CD4-positive, alpha-beta memory T cell (primary cell): ENCODE measurements at regions of chr9 and their contacts with region 1.

Region 1: DNA sequence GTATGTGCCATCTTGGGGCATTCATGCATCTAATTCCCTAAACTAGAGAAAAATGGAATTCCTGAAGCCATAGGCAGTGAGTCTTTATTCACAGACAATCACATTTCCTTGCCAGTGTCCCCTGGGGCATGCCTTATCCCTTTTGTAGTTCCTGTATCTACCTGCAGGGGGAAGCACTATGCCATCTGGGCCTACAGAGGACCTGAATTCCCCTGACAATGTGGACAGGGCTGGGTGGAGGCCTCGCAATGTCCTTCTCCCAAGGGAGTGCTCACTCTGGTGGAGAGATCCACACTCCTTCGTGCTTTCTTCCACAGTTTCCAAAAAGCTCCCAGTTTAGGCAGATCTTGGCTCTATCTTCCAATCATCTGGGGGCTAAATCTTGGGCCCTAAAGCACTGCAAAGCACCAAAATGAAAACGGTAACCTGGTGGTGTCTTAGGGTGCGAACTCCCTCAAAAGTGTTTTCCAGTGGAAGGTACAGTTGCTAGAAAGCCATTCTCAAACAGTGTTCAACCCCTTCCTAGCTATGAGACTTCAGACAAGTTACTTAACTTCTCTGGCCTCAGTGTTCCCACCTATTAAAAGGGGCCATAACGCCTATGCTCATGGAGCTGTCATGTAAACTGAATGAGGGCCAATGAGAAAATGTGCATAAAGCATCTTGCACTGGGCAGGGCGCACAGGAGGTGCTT is 17.5 kb downstream of the WHRN start:
- DNase-seq: peak; percentile 66 to 75 (median 70)
- H3K4me3 ChIP-seq: no peak overlapping the region
- H3K4me3 Mint-ChIP-seq: no peak overlapping the region
- H3K27ac ChIP-seq: no peak overlapping the region
- H3K27ac Mint-ChIP-seq: peak overlapping the region in 2 of 7 donors; percentile 24 to 55
- H3K4me1 ChIP-seq: peaks cover 14% of the 10 kb centered on the region
- H3K4me1 Mint-ChIP-seq: peaks cover 12 to 35% (median 19%) of the 10 kb centered on the region in 4 donors
- H3K27me3 ChIP-seq: no peaks in the 10 kb centered on the region
- H3K27me3 Mint-ChIP-seq: peaks cover 0 to 4% of the 10 kb centered on the region in 2 donors

Region 2: DNA sequence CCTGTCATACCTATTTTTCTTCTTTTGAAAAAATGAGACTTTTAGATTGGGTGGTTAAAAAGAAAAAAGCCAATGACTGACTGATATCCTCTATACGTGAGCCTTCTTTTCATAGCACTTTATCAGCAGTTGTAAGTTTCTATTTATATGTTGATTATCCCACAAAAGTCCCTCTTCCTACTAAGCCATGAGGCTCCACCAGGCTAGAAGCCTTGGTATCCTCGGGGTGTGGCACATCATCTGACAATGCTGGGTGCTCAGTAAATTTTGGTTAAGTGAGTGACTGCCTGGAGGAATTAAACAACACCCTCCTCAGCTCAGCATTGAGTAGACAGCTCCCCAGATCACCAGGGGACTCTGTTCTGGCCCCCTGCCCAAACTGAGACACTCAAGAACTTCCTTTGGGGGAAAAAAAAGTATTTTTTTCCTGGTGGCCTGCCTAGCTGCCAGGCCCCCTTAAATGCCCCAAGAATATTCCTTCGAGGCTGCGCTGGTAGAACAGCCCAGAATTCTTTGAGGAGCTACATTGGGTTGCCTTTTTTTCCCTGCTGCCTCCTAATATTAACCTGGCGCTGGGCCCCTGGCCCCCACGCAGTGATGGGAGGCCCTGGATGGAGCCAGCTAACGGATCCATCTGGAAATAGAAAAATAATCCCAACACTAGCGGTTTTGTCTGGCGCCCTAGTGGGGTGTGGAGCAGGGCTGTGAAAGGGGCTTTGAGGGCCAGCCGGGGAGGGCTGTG is 355.8 kb before region 1 on chr9:
- CTCF ChIA-PET with region 1: no interaction called
- POLR2A ChIA-PET with region 1: no interaction called
- intact Hi-C with region 1: no loop called
- DNase-seq: no peak
- H3K4me3 ChIP-seq: no peak overlapping the region
- H3K4me3 Mint-ChIP-seq: no peak overlapping the region
- H3K27ac ChIP-seq: no peak overlapping the region
- H3K27ac Mint-ChIP-seq: no peak overlapping the region
- H3K4me1 ChIP-seq: no peaks in the 10 kb centered on the region
- H3K4me1 Mint-ChIP-seq: no peaks in the 10 kb centered on the region
- H3K27me3 ChIP-seq: no peaks in the 10 kb centered on the region
- H3K27me3 Mint-ChIP-seq: peaks cover 16 to 24% of the 10 kb centered on the region in 2 donors

Region 3: GRCh38 chr9:114499528-114499927 is 11.8 kb after region 1 on chr9:
- CTCF ChIA-PET with region 1: interaction called, 21 read pairs
- POLR2A ChIA-PET with region 1: interaction called, 15 read pairs
- intact Hi-C with region 1: no loop called
- DNase-seq: no peak
- H3K4me3 ChIP-seq: no peak overlapping the region
- H3K4me3 Mint-ChIP-seq: no peak overlapping the region
- H3K27ac ChIP-seq: no peak overlapping the region
- H3K27ac Mint-ChIP-seq: peak overlapping the region in 2 of 7 donors; percentile 24 to 77
- H3K4me1 ChIP-seq: peaks cover 22% of the 10 kb centered on the region
- H3K4me1 Mint-ChIP-seq: peaks cover 20 to 54% (median 37%) of the 10 kb centered on the region in 4 donors
- H3K27me3 ChIP-seq: no peaks in the 10 kb centered on the region
- H3K27me3 Mint-ChIP-seq: peaks cover 0 to 5% of the 10 kb centered on the region in 2 donors

Region 4: GRCh38 chr9:114511968-114512874 is 24.5 kb after region 1 on chr9:
- CTCF ChIA-PET with region 1: interaction called, 32 read pairs
- POLR2A ChIA-PET with region 1: no interaction called
- intact Hi-C with region 1: no loop called
- DNase-seq: no peak
- H3K4me3 ChIP-seq: no peak overlapping the region
- H3K4me3 Mint-ChIP-seq: no peak overlapping the region
- H3K27ac ChIP-seq: no peak overlapping the region
- H3K27ac Mint-ChIP-seq: no peak overlapping the region
- H3K4me1 ChIP-seq: no peaks in the 10 kb centered on the region
- H3K4me1 Mint-ChIP-seq: peaks cover 0 to 8% (median 2%) of the 10 kb centered on the region in 4 donors
- H3K27me3 ChIP-seq: peaks cover 4% of the 10 kb centered on the region
- H3K27me3 Mint-ChIP-seq: peaks cover 22 to 41% of the 10 kb centered on the region in 2 donors

Region 5: DNA sequence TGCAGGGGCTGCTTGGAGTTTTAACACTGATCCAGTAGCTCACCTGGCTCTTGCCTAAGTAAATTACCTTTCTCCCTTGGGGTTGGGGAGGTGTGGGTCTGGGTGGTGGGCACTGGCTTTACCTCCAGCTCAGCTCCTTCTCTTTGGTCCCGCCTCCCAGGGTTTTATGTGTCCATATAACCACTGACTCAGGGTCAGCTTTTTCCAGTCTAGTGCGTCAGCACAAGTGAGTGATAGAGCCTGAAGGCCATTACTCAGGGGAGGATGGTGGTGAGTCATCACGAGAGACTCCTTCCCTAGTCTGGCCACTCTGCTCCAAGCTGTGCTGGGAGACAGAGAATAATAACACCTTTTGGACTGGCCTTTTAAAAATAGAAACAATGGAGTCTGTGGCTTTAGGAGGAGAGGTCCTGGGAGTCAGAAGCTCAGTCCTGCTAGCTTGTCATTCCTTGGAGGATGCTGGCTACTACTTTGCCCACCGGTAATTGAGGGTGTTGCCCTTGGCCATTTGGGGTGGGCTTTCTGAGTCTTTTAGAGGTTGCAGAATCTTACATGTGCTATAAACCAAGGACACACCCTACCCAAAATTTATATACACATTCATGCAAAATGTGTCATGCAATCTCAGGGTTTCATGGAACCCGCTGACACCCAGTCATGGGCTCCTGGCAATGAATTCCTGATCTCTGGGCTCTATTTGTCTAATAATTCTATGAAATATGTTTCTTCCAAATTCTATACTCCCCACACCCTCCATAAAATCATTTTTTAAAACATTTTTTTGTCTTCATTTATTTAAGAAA is 64.3 kb after region 1 on chr9:
- CTCF ChIA-PET with region 1: no interaction called
- POLR2A ChIA-PET with region 1: no interaction called
- intact Hi-C with region 1: no loop called
- DNase-seq: no peak
- H3K4me3 ChIP-seq: no peak overlapping the region
- H3K4me3 Mint-ChIP-seq: no peak overlapping the region
- H3K27ac ChIP-seq: no peak overlapping the region
- H3K27ac Mint-ChIP-seq: no peak overlapping the region
- H3K4me1 ChIP-seq: no peaks in the 10 kb centered on the region
- H3K4me1 Mint-ChIP-seq: no peaks in the 10 kb centered on the region
- H3K27me3 ChIP-seq: no peaks in the 10 kb centered on the region
- H3K27me3 Mint-ChIP-seq: peaks cover 7 to 9% of the 10 kb centered on the region in 2 donors